ENCODE measurements at regions of chr14 and their contacts with region 1.

Region 1: GRCh38 chr14:99683619-99684355 is at the start of gene CYP46A1:
- DNase-seq: peak; percentile 99
- total RNA-seq, gene CYP46A1: 5.5 TPM

Region 2: GRCh38 chr14:99518441-99519346 is 165.1 kb before region 1 on chr14:
- intact Hi-C with region 1: loop called (anchors 5 kb)
- DNase-seq: peak; percentile 85

Region 3: DNA sequence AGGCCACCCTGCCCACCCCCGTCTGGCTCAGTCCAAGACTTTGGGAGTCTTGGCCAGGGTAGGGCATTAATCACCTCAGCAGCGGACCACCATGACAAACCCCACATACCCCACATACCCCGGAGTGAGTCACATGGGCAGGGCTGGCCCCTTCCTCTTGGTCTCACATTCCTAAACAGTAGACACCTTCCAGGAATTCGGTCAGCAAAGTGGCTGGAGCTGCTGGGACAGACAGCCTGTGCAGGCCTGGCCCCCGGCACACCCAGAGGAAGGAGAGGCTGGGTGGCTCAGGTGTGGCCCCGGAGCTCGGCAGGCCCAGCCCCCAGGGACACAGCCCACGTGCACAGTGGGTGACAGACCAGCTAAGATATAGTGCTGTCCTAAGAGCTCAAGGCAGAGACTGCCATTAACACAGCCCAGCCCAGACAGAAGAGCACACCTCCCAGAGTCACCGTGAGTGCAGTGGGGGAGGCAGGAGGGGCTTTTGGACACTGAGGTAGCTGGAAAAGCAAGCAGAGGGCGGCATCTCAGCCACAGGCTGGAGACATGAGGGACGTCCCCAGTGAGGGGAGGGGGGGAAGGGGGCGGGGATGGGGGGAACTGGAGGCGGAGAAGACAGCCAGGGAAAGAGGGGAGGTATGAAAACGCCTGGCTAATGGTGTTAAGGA is 103.8 kb before region 1 on chr14:
- intact Hi-C with region 1: no loop called
- DNase-seq: no peak

Region 4: DNA sequence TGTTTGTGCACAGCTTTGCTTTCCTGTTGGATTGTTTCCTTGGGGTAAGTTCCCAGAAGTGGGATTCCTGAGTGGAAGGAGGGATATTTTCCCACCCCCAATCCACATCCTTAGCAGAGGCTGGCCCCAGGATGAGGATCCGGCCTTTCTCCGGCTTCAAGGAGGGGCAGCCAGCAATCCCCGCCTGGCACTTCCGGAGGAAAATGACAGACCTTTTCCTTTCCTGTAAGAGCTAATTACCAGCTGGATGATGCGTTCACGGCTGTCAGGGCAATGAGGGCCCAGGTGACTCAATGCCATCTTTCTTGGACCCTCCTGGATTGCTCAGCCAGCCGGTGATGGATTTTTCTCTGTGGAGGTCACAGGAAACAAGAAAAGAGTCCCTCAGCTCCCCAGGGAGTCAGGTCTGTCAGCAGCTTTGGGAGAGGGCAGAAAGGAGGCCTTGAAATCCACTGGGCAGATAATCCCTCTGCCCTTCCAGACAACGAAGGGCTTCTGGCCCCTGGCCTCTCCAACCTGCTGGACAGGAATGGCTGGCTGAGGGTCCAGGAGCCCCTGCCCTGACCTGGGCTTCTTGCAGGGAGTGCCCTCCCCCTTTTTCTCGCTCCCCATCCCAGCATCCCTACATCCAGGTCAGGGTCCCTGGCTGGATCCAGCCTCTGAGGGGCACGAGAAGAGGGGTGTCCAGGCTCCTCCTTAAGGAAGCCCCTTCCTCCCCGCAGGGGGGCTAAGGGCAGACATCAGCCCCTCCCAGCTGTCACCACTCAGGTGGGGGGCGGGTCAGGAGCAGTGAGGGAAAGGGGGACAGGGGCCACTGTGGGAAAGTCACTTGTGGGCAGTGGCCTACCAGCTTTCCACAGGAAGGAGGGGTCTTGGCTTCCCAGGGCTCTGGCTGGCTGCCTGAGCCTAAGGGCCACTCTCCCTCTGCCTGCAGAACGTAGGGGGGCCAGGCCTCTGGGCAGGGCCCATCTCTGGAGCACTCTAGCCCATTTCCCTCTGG is 63.7 kb before region 1 on chr14:
- intact Hi-C with region 1: no loop called
- DNase-seq: no peak

Region 5: DNA sequence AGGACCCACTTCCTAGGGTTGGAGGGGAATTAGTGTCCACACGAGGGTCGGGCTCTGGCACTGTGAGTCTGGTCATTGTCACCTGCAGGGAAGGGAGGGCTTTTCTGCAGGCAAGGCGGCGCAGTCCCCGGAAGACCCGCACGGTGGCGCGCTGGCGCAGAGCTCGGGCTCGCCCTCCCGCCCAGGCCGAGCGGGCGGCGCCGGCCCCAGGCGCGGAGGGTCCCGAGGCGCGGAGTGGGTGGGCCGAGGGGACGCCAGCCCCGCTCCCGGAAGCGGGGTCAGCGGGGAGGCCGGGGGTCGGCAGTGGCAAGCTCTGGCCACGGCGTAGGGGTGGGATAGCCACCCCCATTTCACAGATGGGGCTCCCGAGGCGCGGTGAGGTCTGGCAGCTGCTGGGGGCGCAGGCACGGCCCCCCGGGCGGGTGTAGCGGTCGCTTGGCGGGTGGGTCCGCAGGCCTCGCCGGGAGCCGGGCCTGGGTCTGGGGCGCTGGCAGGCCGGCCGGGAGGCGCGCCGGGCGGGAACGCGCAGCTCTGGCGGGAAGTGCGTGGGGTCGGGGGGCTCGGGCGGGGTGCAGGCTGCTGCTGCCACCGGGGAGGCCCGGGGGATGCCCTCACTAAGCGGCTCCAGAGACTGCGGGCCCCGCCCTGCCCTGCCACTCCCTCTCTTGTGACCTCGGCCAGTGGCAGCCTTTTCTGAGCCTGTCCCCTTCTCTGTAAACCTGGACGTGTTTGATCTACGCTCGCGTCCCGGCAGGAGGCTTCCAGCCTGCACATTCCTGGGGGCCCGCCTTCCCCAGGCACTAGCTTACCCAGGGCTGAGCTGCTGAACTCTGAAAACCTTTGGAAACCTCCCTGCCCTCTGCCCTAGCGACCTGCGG is 46.4 kb after region 1 on chr14:
- intact Hi-C with region 1: loop called (anchors 5 kb)
- DNase-seq: peak; percentile 82

Region 6: DNA sequence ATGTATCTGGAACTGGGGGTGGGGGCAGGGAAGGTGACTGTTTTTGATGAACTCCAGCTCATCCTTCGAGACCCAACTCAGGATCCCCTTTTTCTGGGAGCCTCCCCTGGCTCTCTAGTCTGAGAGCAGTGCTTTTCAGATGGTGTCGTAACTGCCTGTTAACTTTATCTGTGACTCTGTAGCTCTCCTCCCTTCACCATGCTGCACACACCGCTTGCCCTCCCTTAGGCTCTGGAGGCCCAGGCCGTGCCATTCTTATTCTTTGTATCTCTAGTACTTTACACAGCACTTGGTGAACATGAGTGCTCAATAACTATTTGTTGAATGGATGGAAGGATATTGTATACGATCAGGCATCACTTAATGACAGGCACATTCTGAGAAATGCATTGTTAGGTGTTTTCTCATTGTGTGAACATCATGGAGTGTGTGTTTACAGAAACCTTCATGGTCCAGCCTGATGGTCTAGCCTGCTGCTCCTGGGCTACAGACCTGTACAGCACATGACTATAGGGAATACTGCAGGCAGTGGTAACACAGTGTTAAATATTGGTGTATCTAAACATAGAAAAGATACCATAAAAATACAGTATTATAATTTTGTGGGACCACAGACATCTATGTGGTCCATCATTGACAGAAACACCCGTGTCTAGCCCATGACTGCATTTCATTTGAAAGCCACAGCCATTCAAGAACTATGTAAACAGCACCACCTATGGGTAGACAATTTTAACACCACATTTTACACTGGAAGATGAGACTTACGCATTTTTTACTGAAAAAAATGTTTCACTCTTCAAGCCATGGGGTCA is 201.3 kb after region 1 on chr14:
- intact Hi-C with region 1: loop called (anchors 2 kb)
- DNase-seq: no peak

Measured in cardiac septum (tissue), 1 donor.